ENCODE measurements at regions of chr9 and their contacts with region 1.

Region 1: GRCh38 chr9:113581865-113582697 is 118.6 kb downstream of the RGS3 start:
- DNase-seq: peak; percentile 73 to 90 (median 89)
- ATAC-seq: peak; percentile 65 to 72
- H3K4me3 ChIP-seq: no peak overlapping the region
- H3K27ac ChIP-seq: peak overlapping the region; percentile 49
- H3K4me1 ChIP-seq: peaks cover 40% of the 10 kb centered on the region
- H3K27me3 ChIP-seq: no peaks in the 10 kb centered on the region

Region 2: DNA sequence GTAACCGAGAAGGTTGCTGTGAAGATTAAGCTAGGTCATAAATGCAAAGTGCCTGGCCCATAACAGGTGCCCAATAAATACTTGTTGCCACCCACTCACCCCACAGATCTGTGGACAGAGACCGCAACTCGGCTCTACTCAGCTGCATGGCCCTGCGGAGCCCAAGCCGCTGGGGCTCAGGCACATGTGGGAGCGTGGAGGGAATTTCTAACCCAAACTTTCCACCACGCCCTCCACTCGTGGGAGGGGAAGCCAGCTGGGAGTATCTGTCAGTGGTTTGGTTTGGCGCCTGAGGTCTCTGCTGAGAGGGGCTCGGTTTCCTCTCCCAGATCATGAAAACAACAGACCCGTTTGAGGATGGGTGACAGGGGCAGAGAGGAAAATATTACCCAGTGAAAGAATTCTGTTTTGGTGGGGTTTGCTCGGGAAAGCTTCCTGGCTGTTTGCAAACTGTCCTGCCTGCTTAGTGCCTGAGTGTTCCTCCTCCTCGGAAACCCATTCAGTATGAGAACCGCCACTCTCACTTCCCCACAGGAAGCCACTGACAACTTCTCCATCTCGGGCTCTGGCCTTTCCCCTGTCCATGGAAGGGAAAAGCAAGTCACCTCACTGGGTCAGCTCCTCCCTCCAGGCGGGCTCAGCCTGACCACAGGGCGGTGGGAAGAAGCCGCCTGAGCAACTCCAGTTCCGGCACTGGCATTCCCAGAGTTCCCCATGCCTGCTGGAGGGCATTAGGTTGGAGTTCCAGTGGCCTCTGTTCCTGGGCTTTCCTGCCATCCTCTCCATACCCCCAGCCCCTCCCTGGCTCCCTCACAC is 58.5 kb before region 1 on chr9:
- intact Hi-C with region 1: loop called in 1 of 4 experiments (anchors 10 kb)
- DNase-seq: peak; percentile 73 to 85 (median 85)
- ATAC-seq: peak; percentile 61 to 85
- H3K4me3 ChIP-seq: no peak overlapping the region
- H3K27ac ChIP-seq: peak overlapping the region; percentile 36
- H3K4me1 ChIP-seq: peaks cover 46% of the 10 kb centered on the region
- H3K27me3 ChIP-seq: no peaks in the 10 kb centered on the region

Measured in right cardiac atrium (tissue), 5 donors.